Left lung (tissue), 14 donors: ENCODE measurements at regions of chr5 and their contacts with region 1.

Region 1: GRCh38 chr5:94968507-94969095 is 316.3 kb downstream of the MCTP1 start:
- DNase-seq: peak in 2 of 4 donors; percentile 46 to 61
- ATAC-seq: peak; percentile 99
- H3K4me3 ChIP-seq: no peak overlapping the region
- H3K27ac ChIP-seq: no peak overlapping the region
- H3K4me1 ChIP-seq: peaks cover 0 to 5% of the 10 kb centered on the region in 2 donors
- H3K27me3 ChIP-seq: no peaks in the 10 kb centered on the region
- CTCF ChIP-seq: peak; percentile 58 to 73

Region 2: DNA sequence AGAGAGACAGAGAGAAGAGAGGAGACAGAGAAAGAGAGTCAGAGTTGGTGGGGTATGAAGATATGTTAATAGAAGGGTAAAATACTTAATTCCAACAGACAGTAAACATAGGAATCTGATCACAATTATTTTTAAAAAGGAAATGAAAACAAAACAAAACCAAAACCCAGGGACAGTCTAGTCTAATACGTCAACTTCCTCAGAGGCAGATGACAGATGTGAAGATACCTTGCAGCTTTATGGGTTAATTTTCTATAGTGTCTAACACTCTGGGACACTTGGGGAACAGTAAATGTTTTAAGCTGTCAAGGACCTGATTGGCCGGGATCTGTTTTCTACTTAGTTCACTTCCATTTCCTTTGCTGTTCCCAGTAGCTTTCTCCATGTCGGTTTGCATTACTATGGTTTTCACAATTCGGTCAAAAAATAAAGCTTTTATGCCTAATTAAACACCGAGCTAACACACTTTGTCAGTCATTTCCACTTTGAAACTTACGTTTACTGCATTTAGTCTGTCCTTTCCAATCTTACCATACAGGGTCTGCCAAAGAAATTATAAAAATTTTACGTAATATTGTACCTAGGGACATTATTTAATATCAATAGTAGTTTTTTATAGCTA is 99.8 kb after region 1 on chr5:
- intact Hi-C with region 1: no loop called
- DNase-seq: no peak
- ATAC-seq: no peak
- H3K4me3 ChIP-seq: no peak overlapping the region
- H3K27ac ChIP-seq: no peak overlapping the region
- H3K4me1 ChIP-seq: peaks cover 0 to 44% of the 10 kb centered on the region in 2 donors
- H3K27me3 ChIP-seq: no peaks in the 10 kb centered on the region
- CTCF ChIP-seq: no peak

Region 3: DNA sequence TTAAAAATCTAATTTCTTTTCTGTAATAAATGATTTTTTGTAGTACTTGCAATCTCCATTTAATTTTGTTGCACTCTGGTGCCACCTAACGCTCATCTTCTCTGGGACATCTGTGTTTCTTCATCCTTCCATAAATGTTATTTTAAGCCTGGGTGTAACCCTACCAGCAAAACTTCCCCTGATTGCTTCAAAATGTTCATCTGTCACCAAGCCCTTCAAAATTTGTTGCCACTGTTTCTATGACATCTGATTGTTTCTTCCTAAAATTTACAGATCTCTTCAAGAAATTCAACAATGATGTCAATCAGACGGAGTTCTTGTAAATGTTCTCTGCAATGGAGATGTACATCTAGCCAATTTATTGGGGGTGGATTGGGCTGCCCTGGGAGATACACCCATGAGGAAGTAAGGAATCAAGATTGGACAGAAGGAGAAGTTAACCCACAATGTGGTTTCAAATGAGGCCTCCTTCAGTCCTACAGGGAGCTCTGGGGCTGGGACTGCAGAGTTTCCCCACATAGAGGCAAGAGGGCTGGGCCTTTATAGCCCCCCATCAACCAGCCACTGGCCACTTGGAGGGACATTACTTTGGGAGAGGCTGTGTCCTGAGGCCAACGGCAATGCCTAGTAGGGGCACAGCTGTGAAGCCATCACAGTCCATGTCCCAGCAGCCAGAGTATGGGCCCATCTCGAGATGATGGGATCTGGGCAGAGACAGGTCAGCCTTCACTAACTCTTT is 293.0 kb after region 1 on chr5:
- intact Hi-C with region 1: loop called in 1 of 2 experiments (anchors 10 kb)
- DNase-seq: peak in 2 of 4 donors; percentile 16 to 32
- ATAC-seq: peak; percentile 71
- H3K4me3 ChIP-seq: no peak overlapping the region
- H3K27ac ChIP-seq: no peak overlapping the region
- H3K4me1 ChIP-seq: peaks cover 0 to 5% of the 10 kb centered on the region in 2 donors
- H3K27me3 ChIP-seq: no peaks in the 10 kb centered on the region
- CTCF ChIP-seq: peak; percentile 19 to 23